ENCODE measurements at regions of chr16 and their contacts with region 1.

Region 1: GRCh38 chr16:85253084-85253941 is 141.0 kb upstream of the CIBAR2 start:
- DNase-seq: peak; percentile 29 to 55 (median 44)
- H3K4me3 ChIP-seq: no peak overlapping the region
- H3K4me3 Mint-ChIP-seq: no peak overlapping the region
- H3K27ac ChIP-seq: no peak overlapping the region
- H3K27ac Mint-ChIP-seq: no peak overlapping the region
- H3K4me1 ChIP-seq: no peaks in the 10 kb centered on the region
- H3K4me1 Mint-ChIP-seq: no peaks in the 10 kb centered on the region
- H3K27me3 ChIP-seq: no peaks in the 10 kb centered on the region
- H3K27me3 Mint-ChIP-seq: peaks cover under 1 to 4% of the 10 kb centered on the region in 2 donors

Region 2: GRCh38 chr16:85240982-85241924 is 12.1 kb before region 1 on chr16:
- CTCF ChIA-PET with region 1: interaction called, 20 read pairs
- POLR2A ChIA-PET with region 1: no interaction called
- intact Hi-C with region 1: no loop called
- DNase-seq: no peak
- H3K4me3 ChIP-seq: no peak overlapping the region
- H3K4me3 Mint-ChIP-seq: no peak overlapping the region
- H3K27ac ChIP-seq: no peak overlapping the region
- H3K27ac Mint-ChIP-seq: no peak overlapping the region
- H3K4me1 ChIP-seq: no peaks in the 10 kb centered on the region
- H3K4me1 Mint-ChIP-seq: peaks cover 3 to 12% (median 7%) of the 10 kb centered on the region in 4 donors
- H3K27me3 ChIP-seq: no peaks in the 10 kb centered on the region
- H3K27me3 Mint-ChIP-seq: peaks cover 10 to 22% of the 10 kb centered on the region in 2 donors

Region 3: GRCh38 chr16:85354686-85355514 is 101.6 kb after region 1 on chr16:
- CTCF ChIA-PET with region 1: no interaction called
- POLR2A ChIA-PET with region 1: no interaction called
- intact Hi-C with region 1: no loop called
- DNase-seq: no peak
- H3K4me3 ChIP-seq: no peak overlapping the region
- H3K4me3 Mint-ChIP-seq: no peak overlapping the region
- H3K27ac ChIP-seq: no peak overlapping the region
- H3K27ac Mint-ChIP-seq: no peak overlapping the region
- H3K4me1 ChIP-seq: no peaks in the 10 kb centered on the region
- H3K4me1 Mint-ChIP-seq: no peaks in the 10 kb centered on the region
- H3K27me3 ChIP-seq: no peaks in the 10 kb centered on the region
- H3K27me3 Mint-ChIP-seq: peaks cover 2 to 5% of the 10 kb centered on the region in 2 donors

Measured in CD4-positive, alpha-beta memory T cell (primary cell).